ENCODE measurements at regions of chr3 and their contacts with region 1.

Region 1: GRCh38 chr3:10223676-10224639 is 24.3 kb upstream of the TATDN2 start:
- DNase-seq: no peak
- H3K4me3 ChIP-seq: no peak overlapping the region
- H3K27ac ChIP-seq: no peak overlapping the region
- H3K4me1 ChIP-seq: peaks cover 2 to 15% (median 8%) of the 10 kb centered on the region in 4 experiments
- H3K27me3 ChIP-seq: no peaks in the 10 kb centered on the region
- CTCF ChIP-seq: no peak
- EP300 ChIP-seq: no peak
- POLR2A ChIP-seq: no peak
- RAD21 ChIP-seq: no peak

Region 2: GRCh38 chr3:10248184-10249080 is 24.5 kb after region 1 on chr3 and contains the start of gene TATDN2:
- CTCF ChIA-PET with region 1: no interaction called
- POLR2A ChIA-PET with region 1: interaction called, 14 read pairs
- DNase-seq: peak; percentile 89 to 97
- H3K4me3 ChIP-seq: peak within 1 kb of the TSS; percentile 72 to 92 (median 86)
- H3K27ac ChIP-seq: peak within 1 kb of the TSS; percentile 58; the same call in 1 of the 2 replicates
- H3K4me1 ChIP-seq: peaks cover 0 to 11% (median 7%) of the 10 kb centered on the region in 4 experiments; a peak in 6 of 7 replicates
- H3K27me3 ChIP-seq: no peaks in the 10 kb centered on the region
- CTCF ChIP-seq: no peak
- EP300 ChIP-seq: no peak
- POLR2A ChIP-seq: peak; percentile 73 to 83
- RAD21 ChIP-seq: no peak
- total RNA-seq, gene TATDN2: 34.8 and 35.3 TPM in 2 replicates

Measured in H1 (cell line).